BJ (cell line): ENCODE measurements at regions of chrX and their contacts with region 1.

Region 1: GRCh38 chrX:63511346-63511745 is 160.2 kb upstream of the SPIN4 start:
- DNase-seq: no peak
- H3K4me3 ChIP-seq: no peak overlapping the region
- H3K27me3 ChIP-seq: no peaks in the 10 kb centered on the region
- CTCF ChIP-seq: no peak

Region 2: DNA sequence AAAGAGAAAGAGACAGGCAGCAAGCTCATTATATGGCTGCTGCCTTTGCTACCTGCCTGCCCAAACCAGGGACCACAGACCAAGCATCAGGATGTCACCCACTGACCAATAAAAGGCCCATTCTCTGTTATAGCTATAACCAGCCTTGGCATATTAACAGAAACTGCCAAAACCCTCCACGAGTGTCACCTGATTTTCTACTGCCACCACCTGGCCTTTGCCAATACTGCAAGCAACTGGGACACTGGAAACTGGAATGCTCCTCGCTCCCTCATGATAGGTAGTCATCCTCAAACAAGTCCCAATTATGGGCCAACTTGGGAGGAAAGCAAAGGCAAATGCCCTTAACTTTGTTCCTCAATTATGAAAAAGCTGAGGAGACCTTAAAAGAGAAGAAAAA is 236.2 kb before region 1 on chrX:
- CTCF ChIA-PET with region 1: interaction called, 3 read pairs
- POLR2A ChIA-PET with region 1: interaction called, 11 read pairs
- DNase-seq: no peak
- H3K4me3 ChIP-seq: no peak overlapping the region
- H3K27me3 ChIP-seq: no peaks in the 10 kb centered on the region
- CTCF ChIP-seq: peak; percentile 62

Region 3: GRCh38 chrX:63560601-63561218 is 49.4 kb after region 1 on chrX:
- CTCF ChIA-PET with region 1: no interaction called
- POLR2A ChIA-PET with region 1: no interaction called
- DNase-seq: peak; percentile 8
- H3K4me3 ChIP-seq: peak overlapping the region; percentile 74
- H3K27me3 ChIP-seq: no peaks in the 10 kb centered on the region
- CTCF ChIP-seq: no peak

Region 4: DNA sequence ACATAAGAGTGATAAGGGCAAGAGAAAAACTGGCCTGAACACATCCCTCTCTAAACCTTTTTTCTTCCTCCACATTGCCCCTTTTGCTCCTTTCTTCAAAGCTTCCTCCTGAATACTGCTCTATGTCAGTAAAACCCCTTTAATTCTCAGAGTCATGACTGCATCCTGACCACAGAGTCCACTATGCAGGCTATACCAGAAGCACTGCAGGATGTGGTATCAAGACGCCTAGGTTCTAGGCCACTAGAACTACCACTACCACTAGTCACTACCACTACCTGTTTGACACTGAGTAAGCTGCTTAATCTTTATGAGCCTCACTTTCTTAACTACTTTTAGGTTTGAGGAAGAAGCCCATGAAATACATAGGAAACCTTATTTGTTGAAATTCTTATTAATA is 234.9 kb after region 1 on chrX:
- CTCF ChIA-PET with region 1: no interaction called
- POLR2A ChIA-PET with region 1: no interaction called
- DNase-seq: no peak
- H3K4me3 ChIP-seq: no peak overlapping the region
- H3K27me3 ChIP-seq: no peaks in the 10 kb centered on the region
- CTCF ChIP-seq: no peak